Endothelial cell of umbilical vein (primary cell): ENCODE measurements at regions of chr15 and their contacts with region 1.

Region 1: DNA sequence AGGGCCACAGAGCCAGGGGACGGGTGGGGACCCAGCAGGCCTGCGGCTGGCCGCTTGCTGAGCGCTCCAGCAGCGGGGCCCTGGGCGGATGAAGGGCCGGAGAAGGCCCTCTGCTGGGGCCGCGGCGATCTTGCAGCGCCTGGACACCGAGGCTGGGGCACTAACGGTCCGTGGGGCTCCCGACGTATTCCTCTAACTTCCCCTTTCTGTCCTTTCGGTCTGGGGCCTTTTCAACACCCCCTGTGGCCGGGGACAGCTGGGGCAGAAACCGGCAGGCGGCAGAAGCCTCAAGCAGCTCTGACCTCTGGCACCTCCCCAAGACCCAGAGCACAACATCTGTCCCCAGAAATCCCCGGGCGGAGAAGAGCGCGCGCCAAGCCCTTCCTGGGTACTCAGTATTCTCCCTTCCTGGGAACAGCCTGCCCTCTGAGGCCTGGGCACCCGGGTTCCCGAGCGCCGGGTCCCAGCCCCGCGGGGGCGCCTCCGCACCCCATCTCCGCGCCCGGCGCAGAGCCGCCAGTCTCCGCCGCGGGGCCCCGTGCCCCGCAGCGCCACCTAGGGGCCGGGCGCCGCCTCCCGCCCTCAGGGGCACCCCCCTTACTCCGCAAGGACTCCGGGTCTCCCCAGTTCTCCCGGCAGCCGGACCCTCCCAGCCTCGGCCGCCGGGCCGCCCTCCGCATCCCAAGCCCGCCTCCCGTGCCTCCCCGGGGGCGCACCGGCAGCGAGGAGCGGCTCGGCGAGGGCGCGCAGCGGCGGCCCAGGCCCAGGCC is 582 bp upstream of the SLCO3A1 start:
- DNase-seq: peak; percentile 21
- H3K4me3 ChIP-seq: peak overlapping the region; percentile 19 to 33 (median 31)
- H3K27ac ChIP-seq: no peak overlapping the region
- H3K4me1 ChIP-seq: peaks cover 3% of the 10 kb centered on the region
- H3K27me3 ChIP-seq: peaks cover 9 to 10% of the 10 kb centered on the region in 2 experiments
- CTCF ChIP-seq: peak; percentile 62
- POLR2A ChIP-seq: no peak

Region 2: DNA sequence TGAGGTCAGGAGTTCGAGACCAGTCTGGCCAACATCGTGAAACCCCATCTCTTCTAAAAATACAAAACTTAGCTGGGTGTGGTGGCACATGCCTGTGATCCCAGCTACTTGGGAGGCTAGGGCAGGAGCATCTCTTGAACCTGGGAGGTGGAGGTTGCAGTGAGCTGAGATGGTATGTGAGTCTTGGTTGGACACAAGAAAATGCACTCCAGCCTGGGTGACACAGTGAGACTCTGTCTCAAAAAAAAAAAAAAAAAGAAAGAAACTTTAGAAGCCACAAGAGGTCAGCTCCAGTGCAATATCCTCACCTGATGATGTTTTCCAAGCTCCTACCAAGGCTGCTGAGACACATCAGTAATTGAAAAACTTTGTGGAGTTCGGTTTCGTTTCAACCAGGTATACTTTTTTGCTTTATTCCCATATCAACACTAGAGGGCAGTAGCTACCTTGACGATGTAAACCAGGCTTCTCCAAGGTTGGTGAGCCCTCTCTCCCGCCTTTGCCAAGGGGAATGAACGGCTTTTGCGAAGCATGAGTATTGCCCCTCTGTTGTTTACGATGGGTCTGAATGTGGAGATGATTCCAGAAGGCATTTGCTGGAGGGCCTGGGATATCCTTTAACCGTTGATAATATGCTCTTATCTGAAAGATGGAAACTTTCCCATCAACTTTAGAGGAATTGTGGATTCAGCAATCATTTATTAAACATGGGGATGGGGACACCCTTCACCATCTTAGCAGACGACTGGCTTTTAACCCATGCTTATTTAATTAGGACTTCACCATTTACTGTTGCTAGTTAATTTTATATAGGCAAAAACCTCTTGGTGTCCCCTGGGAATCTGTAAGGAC is 550.1 kb before region 1 on chr15:
- CTCF ChIA-PET with region 1: no interaction called
- POLR2A ChIA-PET with region 1: no interaction called
- dilution Hi-C with region 1: no loop called
- intact Hi-C with region 1: loop called (anchors 1 kb)
- DNase-seq: peak; percentile 46
- H3K4me3 ChIP-seq: no peak overlapping the region
- H3K27ac ChIP-seq: no peak overlapping the region
- H3K4me1 ChIP-seq: no peaks in the 10 kb centered on the region
- H3K27me3 ChIP-seq: peaks cover 2 to 3% of the 10 kb centered on the region in 2 experiments
- CTCF ChIP-seq: peak; percentile 53 to 65
- POLR2A ChIP-seq: no peak

Region 3: DNA sequence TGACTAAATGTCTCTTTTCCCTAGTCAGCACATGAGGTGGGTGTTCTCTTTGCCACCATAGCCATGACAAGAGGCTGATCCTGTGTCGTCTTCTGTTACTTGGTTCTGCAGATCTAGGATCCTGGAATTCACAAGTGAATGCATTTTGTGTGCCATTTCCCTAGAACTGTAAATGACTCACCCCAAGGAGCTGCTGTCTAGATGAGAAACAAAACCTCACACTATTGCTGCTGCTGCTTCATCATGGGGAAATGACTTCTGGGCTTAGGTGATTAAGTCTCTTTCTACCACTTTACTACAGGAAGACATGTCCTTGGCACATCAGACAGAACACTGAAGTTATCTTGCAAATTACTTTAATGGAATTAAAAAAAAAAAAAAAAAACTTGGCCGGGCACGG is 55.5 kb after region 1 on chr15:
- CTCF ChIA-PET with region 1: no interaction called
- POLR2A ChIA-PET with region 1: no interaction called
- dilution Hi-C with region 1: no loop called
- intact Hi-C with region 1: no loop called
- DNase-seq: no peak
- H3K4me3 ChIP-seq: no peak overlapping the region
- H3K27ac ChIP-seq: no peak overlapping the region
- H3K4me1 ChIP-seq: no peaks in the 10 kb centered on the region
- H3K27me3 ChIP-seq: no peaks in the 10 kb centered on the region
- CTCF ChIP-seq: no peak
- POLR2A ChIP-seq: no peak

Region 4: DNA sequence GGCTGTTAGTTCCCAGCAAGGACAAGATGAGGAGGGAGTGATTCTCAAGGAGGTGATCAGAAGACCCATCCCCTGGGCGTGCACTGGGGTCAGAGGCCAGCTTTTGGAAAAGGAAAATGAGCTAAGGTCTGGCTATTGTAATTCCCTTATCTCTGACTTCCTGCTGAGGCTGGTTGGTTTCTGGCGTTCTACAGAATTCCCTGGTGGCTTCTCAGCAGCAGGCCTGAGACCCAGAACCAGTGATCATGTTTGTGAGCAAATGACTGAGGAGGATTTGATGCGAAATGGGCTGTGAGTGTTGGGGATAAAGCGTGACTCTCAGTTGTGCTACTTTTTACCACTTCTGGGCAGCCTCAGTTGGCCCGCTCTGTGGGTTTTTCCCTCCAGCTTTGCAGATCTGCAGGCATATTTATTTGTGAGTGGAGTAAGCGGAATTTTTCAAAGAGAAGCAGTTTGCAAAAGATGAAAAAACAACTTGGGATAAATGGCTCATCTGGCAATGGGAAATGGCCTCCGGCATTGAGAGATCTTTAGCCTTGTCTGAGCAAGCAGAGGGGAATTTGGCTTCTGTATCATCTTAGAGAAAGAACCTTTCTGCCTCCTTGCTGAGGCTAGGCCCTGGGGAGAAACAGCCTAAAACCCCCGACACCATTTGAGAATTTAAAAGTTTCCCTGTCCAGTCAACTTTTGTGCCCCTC is 103.2 kb after region 1 on chr15:
- CTCF ChIA-PET with region 1: no interaction called
- POLR2A ChIA-PET with region 1: no interaction called
- dilution Hi-C with region 1: no loop called
- intact Hi-C with region 1: no loop called
- DNase-seq: no peak
- H3K4me3 ChIP-seq: no peak overlapping the region
- H3K27ac ChIP-seq: no peak overlapping the region
- H3K4me1 ChIP-seq: no peaks in the 10 kb centered on the region
- H3K27me3 ChIP-seq: no peaks in the 10 kb centered on the region
- CTCF ChIP-seq: no peak
- POLR2A ChIP-seq: no peak